Spleen (tissue), 13 donors: ENCODE measurements at regions of chr12 and their contacts with region 1.

Region 1: GRCh38 chr12:68971351-68971772 is 38.4 kb upstream of the CPM start:
- DNase-seq: no peak
- H3K4me3 ChIP-seq: no peak overlapping the region
- H3K27ac ChIP-seq: no peak overlapping the region
- H3K4me1 ChIP-seq: no peaks in the 10 kb centered on the region
- H3K27me3 ChIP-seq: no peaks in the 10 kb centered on the region
- CTCF ChIP-seq: no peak
- POLR2A ChIP-seq: no peak

Region 2: DNA sequence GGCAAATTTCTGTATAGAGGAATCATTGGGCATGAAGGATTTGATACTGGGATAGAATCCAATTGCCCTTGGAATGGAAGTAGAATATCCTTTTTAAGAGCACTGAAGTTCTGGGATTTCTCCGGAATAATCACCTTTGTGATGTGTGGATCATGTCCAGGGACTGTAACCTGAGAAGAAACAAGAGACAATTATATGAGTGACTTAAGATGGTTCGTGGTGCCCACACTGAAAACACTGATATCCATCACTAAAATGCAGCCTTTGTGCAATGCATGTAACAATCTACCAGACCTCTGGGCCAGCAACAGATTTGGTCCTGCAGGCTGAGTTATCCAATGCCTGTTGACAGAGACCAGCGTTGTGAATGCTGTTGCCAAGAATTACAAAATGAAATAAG is 114.9 kb before region 1 on chr12:
- intact Hi-C with region 1: no loop called
- DNase-seq: no peak
- H3K4me3 ChIP-seq: no peak overlapping the region
- H3K27ac ChIP-seq: no peak overlapping the region
- H3K4me1 ChIP-seq: no peaks in the 10 kb centered on the region
- H3K27me3 ChIP-seq: no peaks in the 10 kb centered on the region
- CTCF ChIP-seq: no peak
- POLR2A ChIP-seq: no peak

Region 3: DNA sequence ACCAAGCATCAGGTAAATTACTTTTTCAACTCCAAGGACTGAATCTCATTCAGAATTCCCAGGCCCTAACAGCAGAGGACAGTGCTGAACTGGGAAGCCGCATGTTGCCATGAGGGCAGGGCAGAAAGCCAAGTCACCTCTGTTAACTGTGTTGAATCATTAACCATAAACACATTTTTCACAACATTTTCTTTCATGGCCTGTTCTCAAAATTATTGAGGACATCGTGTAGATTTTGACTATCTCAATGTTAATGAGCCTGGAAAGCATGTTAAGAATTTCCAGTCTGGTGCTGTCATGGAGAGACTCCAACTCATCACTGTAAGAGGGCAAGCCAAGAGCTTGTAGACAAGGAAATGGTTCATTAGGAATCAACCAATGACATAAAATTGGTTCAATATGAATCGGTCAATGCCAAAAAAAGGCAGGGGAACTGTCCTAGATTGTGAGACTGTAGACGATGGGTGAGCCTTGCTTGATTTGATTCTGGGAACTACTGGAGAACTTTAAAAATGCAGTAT is 72.1 kb before region 1 on chr12:
- intact Hi-C with region 1: no loop called
- DNase-seq: no peak
- H3K4me3 ChIP-seq: no peak overlapping the region
- H3K27ac ChIP-seq: no peak overlapping the region
- H3K4me1 ChIP-seq: peaks cover 0 to 38% (median 23%) of the 10 kb centered on the region in 6 donors
- H3K27me3 ChIP-seq: no peaks in the 10 kb centered on the region
- CTCF ChIP-seq: no peak
- POLR2A ChIP-seq: no peak

Region 4: DNA sequence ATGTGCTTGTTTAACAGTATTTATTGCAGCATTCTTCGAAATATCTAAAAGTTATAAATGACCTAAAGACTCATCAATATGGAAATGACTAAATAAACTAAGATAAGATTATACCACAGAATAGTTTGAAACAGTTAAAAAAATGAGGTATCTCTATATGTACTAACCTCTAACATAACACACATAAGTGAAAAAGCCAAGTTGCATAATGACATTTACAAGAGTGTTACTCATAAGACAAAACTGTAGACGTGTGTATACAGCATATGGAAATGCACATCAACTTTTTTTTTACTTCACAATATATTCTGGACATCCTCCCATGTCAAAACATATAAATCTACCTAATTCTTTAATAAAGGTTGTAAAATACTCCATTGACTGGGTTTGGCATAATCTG is 61.2 kb before region 1 on chr12:
- intact Hi-C with region 1: loop called (anchors 5 kb)
- DNase-seq: no peak
- H3K4me3 ChIP-seq: no peak overlapping the region
- H3K27ac ChIP-seq: no peak overlapping the region
- H3K4me1 ChIP-seq: peaks cover 0 to 18% (median under 1%) of the 10 kb centered on the region in 6 donors
- H3K27me3 ChIP-seq: no peaks in the 10 kb centered on the region
- CTCF ChIP-seq: no peak
- POLR2A ChIP-seq: no peak